Mucosa of descending colon (tissue), 3 donors: ENCODE measurements at regions of chr18 and their contacts with region 1.

Region 1: DNA sequence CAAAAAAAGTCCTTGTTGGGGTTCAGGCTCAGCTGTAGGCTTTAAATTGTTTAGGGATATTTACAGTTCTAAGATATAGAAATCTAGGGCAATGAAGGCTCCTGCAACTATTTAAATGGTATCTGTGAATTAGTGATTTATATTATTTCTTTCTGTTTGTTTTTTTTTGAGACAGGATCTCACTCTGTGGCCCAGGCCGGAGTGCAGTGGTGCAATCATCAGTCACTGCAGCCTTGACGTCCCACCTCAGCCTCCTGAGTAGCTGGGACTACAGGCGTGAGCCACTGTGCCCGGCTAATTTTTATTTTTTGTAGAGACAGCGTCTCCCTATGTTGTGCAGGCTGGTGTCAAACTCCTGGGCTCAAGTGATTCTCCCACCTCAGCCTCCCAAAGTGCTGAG is 32.3 kb upstream of the NDUFV2 start:
- DNase-seq: no peak
- ATAC-seq: no peak
- H3K4me3 ChIP-seq: no peak overlapping the region
- H3K4me1 ChIP-seq: peaks cover 6% of the 10 kb centered on the region
- CTCF ChIP-seq: no peak

Region 2: DNA sequence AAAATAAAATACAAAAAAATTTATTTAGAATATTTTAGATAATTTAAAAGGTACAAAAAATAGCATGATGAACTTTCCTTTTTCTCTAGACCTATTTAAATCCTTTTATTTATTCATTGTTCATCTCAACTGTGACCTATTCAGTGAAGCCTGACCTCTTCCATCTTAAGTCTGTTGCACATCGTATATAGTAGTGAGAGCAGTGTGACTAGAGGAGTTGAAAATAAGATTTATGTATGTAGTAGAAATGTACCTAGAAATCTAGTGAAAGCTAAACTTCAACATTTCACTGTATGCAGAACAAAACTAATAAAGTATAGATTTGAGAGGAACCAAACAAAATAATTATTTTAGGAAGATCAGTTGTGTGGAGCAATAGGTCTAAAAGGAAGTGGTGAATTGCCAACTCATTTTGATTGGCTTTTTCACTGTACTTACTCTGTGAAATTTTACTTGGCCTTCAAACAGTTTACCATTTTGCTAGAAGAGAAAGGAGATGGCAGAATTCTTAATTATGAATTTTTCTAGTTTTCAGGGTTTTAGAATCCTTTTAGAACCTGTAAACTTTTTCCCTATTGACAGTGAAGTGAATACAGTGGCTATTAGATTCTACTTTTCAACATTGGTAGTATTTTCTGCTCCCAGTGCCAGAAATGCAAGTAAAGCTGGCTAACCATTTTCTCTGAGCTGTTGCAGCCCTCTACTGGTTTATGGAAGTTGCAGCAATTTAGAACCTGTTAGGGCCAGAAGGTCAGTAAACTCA is 77.4 kb after region 1 on chr18:
- intact Hi-C with region 1: loop called (anchors 5 kb)
- DNase-seq: peak in 1 of 3 donors; percentile 58
- ATAC-seq: peak; percentile 91
- H3K4me3 ChIP-seq: no peak overlapping the region
- H3K4me1 ChIP-seq: peaks cover 19% of the 10 kb centered on the region
- CTCF ChIP-seq: peak; percentile 53

Region 3: DNA sequence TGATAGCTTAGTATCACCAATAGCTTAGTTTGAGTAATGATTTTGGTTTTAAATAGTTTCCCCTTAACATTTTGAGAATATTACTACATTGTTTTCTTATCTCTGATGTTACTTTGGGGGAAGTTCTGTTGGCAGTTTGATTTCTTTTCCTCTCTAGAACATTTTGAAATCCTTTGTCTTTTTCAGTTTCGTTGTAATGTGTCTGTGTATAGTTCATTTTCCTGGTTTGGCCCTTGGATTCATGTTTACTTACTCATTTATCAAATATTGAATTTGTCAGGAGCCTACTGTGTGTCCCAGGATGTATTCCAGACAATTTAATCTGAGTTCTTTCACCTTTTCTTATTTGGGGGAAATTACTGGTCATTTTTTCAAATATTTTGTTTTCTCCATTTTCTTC is 83.0 kb after region 1 on chr18:
- intact Hi-C with region 1: loop called (anchors 5 kb)
- DNase-seq: no peak
- ATAC-seq: no peak
- H3K4me3 ChIP-seq: no peak overlapping the region
- H3K4me1 ChIP-seq: no peaks in the 10 kb centered on the region
- CTCF ChIP-seq: no peak

Region 4: GRCh38 chr18:9233771-9234440 is 163.7 kb after region 1 on chr18:
- intact Hi-C with region 1: no loop called
- DNase-seq: no peak
- ATAC-seq: no peak
- H3K4me3 ChIP-seq: no peak overlapping the region
- H3K4me1 ChIP-seq: no peaks in the 10 kb centered on the region
- CTCF ChIP-seq: no peak